Posterior cingulate gyrus (tissue), 11 donors: ENCODE measurements at regions of chr7 and their contacts with region 1.

Region 1: GRCh38 chr7:143416565-143417149 is 8.0 kb upstream of the EPHA1 start:
- DNase-seq: no peak

Region 2: DNA sequence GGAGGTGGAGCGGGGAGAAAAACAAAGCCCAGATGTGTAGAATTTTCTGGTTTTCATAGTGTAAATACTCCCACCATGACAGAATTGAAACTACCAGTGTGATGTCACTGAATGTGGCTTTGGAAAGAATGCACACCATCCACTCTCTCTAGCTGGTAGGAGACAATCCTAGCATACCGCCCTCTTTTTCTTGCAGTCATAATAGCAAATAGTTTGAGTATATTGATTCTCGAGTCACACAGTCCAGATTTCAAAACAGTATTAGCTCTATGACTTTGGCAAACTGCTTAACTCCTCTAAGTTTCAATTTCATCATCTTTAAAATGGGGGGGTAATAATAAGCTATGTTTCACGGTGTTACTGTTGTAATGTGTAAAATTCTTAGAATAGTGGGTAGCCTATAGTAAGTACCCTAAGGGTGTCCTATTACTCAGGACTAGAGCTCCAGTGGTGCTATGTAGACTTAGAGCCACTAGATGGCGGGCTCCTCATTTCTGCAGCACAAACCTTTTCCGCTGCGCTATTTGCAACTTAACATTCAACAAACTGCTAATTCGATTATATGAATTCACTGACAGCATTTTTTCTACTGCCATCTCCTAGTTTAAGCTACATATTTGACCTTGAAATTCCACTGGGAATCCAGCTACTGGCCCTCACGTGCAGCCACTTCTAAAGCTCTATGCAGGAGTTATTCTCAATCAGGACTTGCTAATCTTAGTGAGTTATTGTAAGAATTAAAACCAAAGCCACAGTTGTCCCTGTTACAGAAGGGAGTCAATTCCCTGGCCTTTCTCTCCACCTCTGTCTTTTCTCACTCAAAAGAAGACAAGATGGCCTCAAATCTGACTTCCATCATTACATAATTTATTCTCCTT is 176.1 kb before region 1 on chr7:
- intact Hi-C with region 1: loop called (anchors 2 kb)
- DNase-seq: peak in 8 of 10 donors; percentile 41 to 94 (median 72)

Region 3: DNA sequence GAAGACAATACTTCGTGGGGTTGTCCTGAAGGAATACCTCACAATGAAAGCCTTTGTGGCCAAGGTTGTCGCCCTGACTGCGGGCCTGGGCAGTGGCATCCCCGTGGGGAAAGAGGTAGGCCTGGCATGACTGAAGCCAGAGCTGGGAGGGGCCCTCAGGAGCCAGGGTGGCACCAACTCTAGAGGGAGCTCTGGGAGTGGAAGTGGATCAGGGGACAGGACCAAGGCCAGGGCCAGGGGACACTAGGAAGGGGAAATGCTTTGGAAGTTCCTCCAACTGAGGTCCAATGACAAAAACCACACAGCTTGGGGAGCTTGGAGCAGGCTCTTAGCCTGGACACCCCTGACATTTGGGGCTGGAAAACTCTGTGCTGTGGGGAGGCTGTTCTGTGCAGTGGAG is 94.9 kb before region 1 on chr7:
- intact Hi-C with region 1: loop called (anchors 2 kb)
- DNase-seq: peak in 4 of 10 donors; percentile 19 to 87 (median 42)

Region 4: GRCh38 chr7:143355450-143356385 is 60.9 kb before region 1 on chr7:
- intact Hi-C with region 1: loop called (anchors 10 kb)
- DNase-seq: peak in 1 of 10 donors; percentile 67

Region 5: DNA sequence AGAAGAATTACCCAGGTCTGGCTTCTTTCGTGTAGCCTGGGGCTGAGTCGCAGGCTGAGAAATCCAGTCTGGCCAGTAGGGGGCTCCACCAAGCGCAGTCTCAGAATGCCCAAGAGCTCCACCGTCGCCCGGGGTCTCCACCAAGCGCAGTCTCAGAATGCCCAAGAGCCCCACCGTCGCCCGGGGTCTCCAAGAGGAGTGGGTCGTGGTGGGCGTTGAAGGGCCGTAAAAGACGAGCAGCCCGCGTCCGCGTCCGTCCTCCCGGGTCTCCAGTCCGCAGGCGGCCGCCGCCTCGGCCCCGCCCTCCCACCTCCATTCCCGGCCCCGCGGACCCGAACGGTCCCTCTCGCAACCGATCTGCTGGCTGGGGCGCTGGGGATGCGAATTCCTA is 36.4 kb before region 1 on chr7:
- intact Hi-C with region 1: loop called (anchors 2 kb)
- DNase-seq: peak; percentile 74 to 97 (median 86)